ENCODE measurements at regions of chr11 and their contacts with region 1.

Region 1: GRCh38 chr11:47004595-47005033 is 68.1 kb downstream of the CSTPP1 start:
- DNase-seq: peak; percentile 16 to 92 (median 54)
- ATAC-seq: peak; percentile 98
- H3K4me3 ChIP-seq: no peak overlapping the region; the same call in 1 of the 2 replicates
- H3K27ac ChIP-seq: peak overlapping the region; percentile 79
- H3K4me1 ChIP-seq: peaks cover 28 to 34% of the 10 kb centered on the region in 2 experiments
- H3K27me3 ChIP-seq: no peaks in the 10 kb centered on the region
- CTCF ChIP-seq: peak in 2 of 3 experiments; percentile 10 to 15; a peak in 1 of 6 replicates
- EP300 ChIP-seq: peak; percentile 84
- POLR2A ChIP-seq: no peak
- RAD21 ChIP-seq: peak; percentile 27 to 43; a peak in 3 of 4 replicates

Region 2: DNA sequence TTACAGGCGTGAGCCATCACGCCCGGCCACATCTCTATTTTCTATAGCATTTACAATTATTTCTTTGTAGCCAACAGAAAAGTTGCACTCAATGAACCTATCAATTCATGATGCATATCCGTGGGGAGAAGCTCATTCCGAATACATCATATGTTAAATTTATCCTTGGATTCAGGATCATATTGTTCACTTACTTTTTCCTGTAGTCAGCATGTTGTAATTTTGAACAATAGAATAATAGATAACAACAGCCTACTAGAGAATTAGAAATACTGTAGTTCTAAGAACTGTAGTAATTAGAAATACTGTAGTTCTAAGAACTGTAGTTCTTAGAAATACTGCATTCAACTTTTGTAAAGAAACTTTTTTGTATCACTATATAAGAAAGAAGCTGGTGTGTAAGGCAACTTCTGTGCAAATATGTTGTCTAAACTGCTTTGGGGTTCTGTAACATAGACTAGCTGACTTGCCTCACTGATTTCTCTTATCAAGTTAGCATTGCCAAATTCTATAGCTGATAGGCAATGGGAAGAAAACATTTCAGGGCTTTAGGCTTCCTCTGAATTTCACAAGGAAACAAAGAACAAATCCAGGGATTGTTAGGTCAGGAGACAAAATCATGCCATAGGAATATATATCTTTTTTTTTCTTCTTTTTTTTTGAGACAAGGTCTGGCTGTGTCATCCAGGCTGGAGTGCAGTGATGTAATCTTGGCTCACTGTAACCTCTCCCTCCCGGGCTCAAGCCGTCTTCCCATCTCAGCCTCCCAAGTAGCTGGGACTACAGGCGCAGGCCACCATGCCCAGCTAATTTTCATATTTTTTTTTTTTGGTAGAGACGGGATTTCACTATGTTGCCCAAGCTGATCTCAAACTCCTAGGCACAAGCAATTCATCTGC is 23.8 kb after region 1 on chr11:
- CTCF ChIA-PET with region 1: no interaction called
- POLR2A ChIA-PET with region 1: interaction called, 3 read pairs
- in situ Hi-C with region 1: no loop called
- intact Hi-C with region 1: loop called (anchors 2 kb)
- DNase-seq: peak in 1 of 4 experiments; percentile 31
- ATAC-seq: peak; percentile 82
- H3K4me3 ChIP-seq: no peak overlapping the region
- H3K27ac ChIP-seq: no peak overlapping the region
- H3K4me1 ChIP-seq: peaks cover 0 to 5% of the 10 kb centered on the region in 2 experiments; a peak in 1 of 5 replicates
- H3K27me3 ChIP-seq: no peaks in the 10 kb centered on the region
- CTCF ChIP-seq: no peak
- EP300 ChIP-seq: no peak
- POLR2A ChIP-seq: no peak
- RAD21 ChIP-seq: no peak

Region 3: GRCh38 chr11:47056261-47056915 is 51.8 kb after region 1 on chr11:
- CTCF ChIA-PET with region 1: no interaction called
- POLR2A ChIA-PET with region 1: interaction called, 3 read pairs
- in situ Hi-C with region 1: no loop called
- intact Hi-C with region 1: loop called (anchors 1 kb)
- DNase-seq: peak; percentile 74 to 84 (median 77)
- ATAC-seq: peak; percentile 86
- H3K4me3 ChIP-seq: no peak overlapping the region
- H3K27ac ChIP-seq: peak overlapping the region; percentile 42; the same call in 2 of the 3 replicates
- H3K4me1 ChIP-seq: peaks cover 10 to 28% of the 10 kb centered on the region in 2 experiments
- H3K27me3 ChIP-seq: no peaks in the 10 kb centered on the region
- CTCF ChIP-seq: no peak
- EP300 ChIP-seq: peak; percentile 94
- POLR2A ChIP-seq: no peak
- RAD21 ChIP-seq: peak in 1 of 2 experiments; percentile 27; a peak in 2 of 4 replicates

Measured in K562 (cell line).